ENCODE measurements at regions of chr12 and their contacts with region 1.

Region 1: DNA sequence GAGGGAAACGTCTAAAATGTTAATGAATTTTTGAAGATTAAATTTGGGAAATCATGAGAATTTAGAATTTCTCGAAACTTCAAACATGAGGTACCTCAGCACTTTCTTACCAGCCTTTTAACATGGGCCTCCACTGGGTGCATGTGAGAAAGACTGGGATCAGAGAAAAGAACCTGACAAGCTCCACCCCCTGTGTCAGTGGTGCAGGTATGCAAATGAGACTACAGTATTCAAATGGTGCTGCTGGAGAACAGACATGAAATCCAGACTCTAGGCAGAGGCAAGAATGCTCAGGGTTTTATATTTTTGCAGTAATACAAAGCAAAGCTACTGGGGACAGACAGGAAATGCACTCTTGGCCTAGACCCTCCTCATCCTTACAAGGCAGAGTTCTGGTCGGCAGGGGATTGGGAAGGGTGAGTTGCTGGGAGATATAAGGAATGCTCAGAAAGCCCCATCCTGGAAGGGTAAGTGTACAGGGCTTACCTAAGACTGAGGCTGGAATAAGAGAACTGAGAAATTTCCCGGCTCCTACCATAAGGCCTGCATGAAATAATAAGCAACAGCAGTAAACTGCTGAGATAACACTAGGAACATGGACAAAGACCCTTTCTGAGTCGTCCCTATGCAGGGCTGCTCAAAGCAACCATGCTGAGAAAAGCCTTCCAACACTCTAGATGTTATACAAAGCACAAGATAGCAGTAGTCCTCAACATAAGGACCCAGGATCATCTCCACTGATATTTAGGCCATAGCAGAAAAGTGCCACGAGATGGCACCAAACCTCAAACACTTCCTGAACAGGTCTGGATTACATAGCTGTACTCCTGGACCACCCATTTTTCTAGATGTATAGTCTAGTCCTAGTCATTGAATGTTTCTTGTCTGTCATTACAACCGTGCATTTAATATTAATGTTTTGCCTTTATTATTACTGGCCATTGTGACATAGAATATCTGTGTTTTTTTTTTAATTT is 260.8 kb downstream of the RASSF9 start:
- DNase-seq: peak; percentile 30
- H3K4me3 ChIP-seq: no peak overlapping the region
- H3K27ac ChIP-seq: no peak overlapping the region
- H3K27me3 ChIP-seq: no peaks in the 10 kb centered on the region
- CTCF ChIP-seq: peak; percentile 83

Region 2: GRCh38 chr12:85424581-85425348 is 150.6 kb before region 1 on chr12:
- CTCF ChIA-PET with region 1: interaction called, 12 read pairs
- POLR2A ChIA-PET with region 1: no interaction called
- DNase-seq: no peak
- H3K4me3 ChIP-seq: no peak overlapping the region
- H3K27ac ChIP-seq: no peak overlapping the region
- H3K27me3 ChIP-seq: no peaks in the 10 kb centered on the region
- CTCF ChIP-seq: peak; percentile 49

Region 3: DNA sequence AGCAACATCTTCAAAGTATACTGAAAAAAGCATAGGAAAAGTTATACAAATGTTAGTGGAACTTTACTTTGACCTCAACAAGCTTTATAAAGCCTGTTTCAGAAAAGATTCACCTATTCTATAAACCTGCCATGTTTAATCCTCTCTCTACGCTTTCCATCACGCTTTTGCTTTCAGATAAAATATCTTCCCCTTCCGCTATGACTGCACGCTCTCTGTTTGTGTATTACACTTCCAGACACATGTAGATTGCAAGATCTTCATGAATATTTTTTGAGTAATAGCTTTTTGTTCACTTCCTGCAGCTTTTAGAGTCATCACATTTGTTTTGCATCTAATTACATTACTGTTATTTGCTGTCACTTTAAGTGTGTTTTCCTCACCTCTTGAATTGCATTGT is 10.6 kb before region 1 on chr12:
- CTCF ChIA-PET with region 1: interaction called, 23 read pairs
- POLR2A ChIA-PET with region 1: no interaction called
- DNase-seq: no peak
- H3K4me3 ChIP-seq: no peak overlapping the region
- H3K27ac ChIP-seq: no peak overlapping the region
- H3K27me3 ChIP-seq: no peaks in the 10 kb centered on the region
- CTCF ChIP-seq: no peak

Region 4: GRCh38 chr12:85642810-85643209 is 67.4 kb after region 1 on chr12:
- CTCF ChIA-PET with region 1: interaction called, 34 read pairs
- POLR2A ChIA-PET with region 1: interaction called, 3 read pairs
- DNase-seq: peak; percentile 26
- H3K4me3 ChIP-seq: no peak overlapping the region
- H3K27ac ChIP-seq: no peak overlapping the region
- H3K27me3 ChIP-seq: no peaks in the 10 kb centered on the region
- CTCF ChIP-seq: peak; percentile 63

Region 5: DNA sequence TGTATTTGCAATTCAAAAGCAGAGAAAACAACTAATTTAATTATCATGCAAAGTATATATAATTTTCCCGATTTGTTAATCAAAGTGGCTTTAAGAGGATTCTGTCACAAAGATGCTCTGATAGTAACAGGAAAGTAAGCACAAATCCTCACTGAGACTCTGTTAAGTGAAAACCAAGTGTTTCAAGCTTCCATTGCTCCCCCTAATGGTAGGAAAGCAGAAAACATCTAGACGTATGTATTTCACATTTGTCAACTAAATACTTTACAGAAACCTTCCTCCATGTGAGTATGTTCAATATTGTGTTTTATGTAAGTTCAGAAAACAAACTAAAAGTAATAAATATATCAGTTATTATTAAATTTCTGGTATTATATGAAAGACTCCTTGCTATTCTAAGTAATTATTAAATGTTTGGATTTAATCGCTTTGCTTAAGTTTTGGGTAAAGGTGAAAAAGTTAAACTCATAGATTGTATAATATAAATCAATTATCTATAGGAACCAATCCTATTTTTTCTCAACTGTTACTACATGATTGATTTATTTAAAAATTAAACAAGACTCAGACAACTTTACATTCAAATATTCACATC is 297.2 kb after region 1 on chr12:
- CTCF ChIA-PET with region 1: interaction called, 116 read pairs
- POLR2A ChIA-PET with region 1: no interaction called
- DNase-seq: peak; percentile 13
- H3K4me3 ChIP-seq: no peak overlapping the region
- H3K27ac ChIP-seq: no peak overlapping the region
- H3K27me3 ChIP-seq: no peaks in the 10 kb centered on the region
- CTCF ChIP-seq: peak; percentile 88

Region 6: DNA sequence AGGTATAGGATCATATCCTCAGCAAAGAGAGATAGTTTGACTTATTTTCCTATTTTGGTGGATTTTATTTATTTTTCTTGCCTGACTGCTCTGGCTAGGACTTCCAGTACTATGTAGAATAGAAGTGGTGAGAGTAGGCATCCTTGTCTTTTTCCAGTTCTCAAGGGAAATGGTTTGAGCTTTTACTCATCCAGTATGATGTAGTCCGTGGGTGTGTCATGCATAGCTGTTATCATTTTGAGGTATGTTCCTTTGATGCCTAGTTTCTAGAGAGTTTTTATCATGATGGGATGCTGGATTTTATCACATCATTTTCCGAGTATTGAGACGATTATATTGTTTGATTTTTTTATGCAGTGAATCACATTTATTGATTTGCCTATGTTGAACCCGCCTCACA is 583.5 kb after region 1 on chr12:
- CTCF ChIA-PET with region 1: no interaction called
- POLR2A ChIA-PET with region 1: no interaction called
- DNase-seq: no peak
- H3K4me3 ChIP-seq: no peak overlapping the region
- H3K27ac ChIP-seq: no peak overlapping the region
- H3K27me3 ChIP-seq: no peaks in the 10 kb centered on the region
- CTCF ChIP-seq: no peak